CD4-positive, alpha-beta T cell (primary cell): ENCODE measurements at regions of chr13 and their contacts with region 1.

Region 1: GRCh38 chr13:77316430-77316829 is 10.5 kb downstream of the MYCBP2 start:
- DNase-seq: no peak
- ATAC-seq: no peak
- H3K4me3 ChIP-seq: no peak overlapping the region
- H3K4me3 Mint-ChIP-seq: peak overlapping the region; percentile 46
- H3K27ac ChIP-seq: no peak overlapping the region
- H3K27ac Mint-ChIP-seq: peak overlapping the region; percentile 42
- H3K4me1 ChIP-seq: peaks cover 43% of the 10 kb centered on the region
- H3K4me1 Mint-ChIP-seq: peaks cover 89% of the 10 kb centered on the region
- H3K27me3 ChIP-seq: no peaks in the 10 kb centered on the region
- H3K27me3 Mint-ChIP-seq: no peaks in the 10 kb centered on the region
- CTCF ChIP-seq: no peak

Region 2: GRCh38 chr13:76210262-76210661 is 1106.2 kb before region 1 on chr13:
- CTCF ChIA-PET with region 1: no interaction called
- POLR2A ChIA-PET with region 1: no interaction called
- intact Hi-C with region 1: no loop called
- DNase-seq: no peak
- ATAC-seq: no peak
- H3K4me3 ChIP-seq: no peak overlapping the region
- H3K4me3 Mint-ChIP-seq: no peak overlapping the region
- H3K27ac ChIP-seq: no peak overlapping the region
- H3K27ac Mint-ChIP-seq: no peak overlapping the region
- H3K4me1 ChIP-seq: no peaks in the 10 kb centered on the region
- H3K4me1 Mint-ChIP-seq: no peaks in the 10 kb centered on the region
- H3K27me3 ChIP-seq: no peaks in the 10 kb centered on the region
- H3K27me3 Mint-ChIP-seq: no peaks in the 10 kb centered on the region
- CTCF ChIP-seq: no peak

Region 3: DNA sequence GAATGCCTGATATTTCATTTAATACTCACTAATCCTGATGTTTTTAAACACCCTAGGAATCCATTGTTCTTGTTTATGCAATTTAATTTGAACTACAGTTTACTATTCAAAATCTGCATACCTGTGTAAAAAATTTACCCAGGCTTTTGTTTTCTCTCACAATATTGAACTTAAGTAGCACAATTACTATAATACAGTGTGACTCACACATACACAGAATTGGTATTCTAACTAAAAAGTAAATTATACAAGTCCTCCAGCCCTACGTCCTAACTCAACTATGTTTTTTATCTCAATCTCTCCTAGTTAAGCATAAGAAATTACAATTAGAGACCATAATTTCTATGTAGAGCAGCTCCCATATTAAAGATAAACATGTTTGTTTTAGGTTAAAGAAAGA is 31.3 kb before region 1 on chr13:
- CTCF ChIA-PET with region 1: no interaction called
- POLR2A ChIA-PET with region 1: interaction called, 3 read pairs
- intact Hi-C with region 1: loop called in 1 of 2 experiments (anchors 5 kb)
- DNase-seq: no peak
- ATAC-seq: no peak
- H3K4me3 ChIP-seq: no peak overlapping the region
- H3K4me3 Mint-ChIP-seq: no peak overlapping the region
- H3K27ac ChIP-seq: no peak overlapping the region
- H3K27ac Mint-ChIP-seq: no peak overlapping the region
- H3K4me1 ChIP-seq: peaks cover 2% of the 10 kb centered on the region
- H3K4me1 Mint-ChIP-seq: peaks cover 20% of the 10 kb centered on the region
- H3K27me3 ChIP-seq: no peaks in the 10 kb centered on the region
- H3K27me3 Mint-ChIP-seq: no peaks in the 10 kb centered on the region
- CTCF ChIP-seq: no peak

Region 4: GRCh38 chr13:77300176-77301037 is 16.0 kb before region 1 on chr13:
- CTCF ChIA-PET with region 1: interaction called, 3 read pairs
- POLR2A ChIA-PET with region 1: no interaction called
- intact Hi-C with region 1: loop called in 1 of 2 experiments (anchors 2 kb)
- DNase-seq: peak in 2 of 14 experiments; percentile 42 to 45
- ATAC-seq: no peak
- H3K4me3 ChIP-seq: no peak overlapping the region
- H3K4me3 Mint-ChIP-seq: peak overlapping the region; percentile 37
- H3K27ac ChIP-seq: no peak overlapping the region
- H3K27ac Mint-ChIP-seq: peak overlapping the region; percentile 32
- H3K4me1 ChIP-seq: peaks cover 13% of the 10 kb centered on the region
- H3K4me1 Mint-ChIP-seq: peaks cover 82% of the 10 kb centered on the region
- H3K27me3 ChIP-seq: no peaks in the 10 kb centered on the region
- H3K27me3 Mint-ChIP-seq: no peaks in the 10 kb centered on the region
- CTCF ChIP-seq: no peak